Activated B cell treated with CpG ODN at 0.5 μM for 24 hours (primary cell): ENCODE measurements at regions of chr11 and their contacts with region 1.

Region 1: DNA sequence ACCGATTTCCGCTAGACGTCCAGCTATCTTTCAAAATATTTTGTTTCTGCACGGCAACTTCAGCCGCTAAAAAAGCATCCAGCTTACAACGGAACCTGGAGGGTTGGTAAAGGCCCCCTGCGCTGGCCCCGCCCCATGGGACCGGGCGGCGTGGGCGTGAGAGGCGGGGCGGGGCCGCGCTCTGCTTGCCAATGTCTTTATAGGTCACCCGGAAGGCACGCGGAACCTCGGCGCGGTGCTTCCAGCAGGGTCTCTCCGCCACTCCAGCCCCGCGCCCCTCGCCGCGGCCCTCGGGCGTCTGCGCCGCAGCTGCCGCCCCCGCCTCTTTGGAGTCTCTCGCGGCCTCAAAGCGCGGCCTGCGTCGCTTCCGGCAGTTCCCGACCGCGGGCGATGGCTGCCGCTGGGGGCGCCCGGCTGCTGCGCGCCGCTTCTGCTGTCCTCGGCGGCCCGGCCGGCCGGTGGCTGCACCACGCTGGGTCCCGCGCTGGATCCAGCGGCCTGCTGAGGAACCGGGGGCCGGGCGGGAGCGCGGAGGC is at the start of gene FDX1:
- DNase-seq: peak; percentile 87
- ATAC-seq: peak; percentile 86
- H3K4me3 Mint-ChIP-seq: peak within 1 kb of the TSS; percentile 95
- H3K27ac Mint-ChIP-seq: peak within 1 kb of the TSS; percentile 87
- H3K4me1 Mint-ChIP-seq: peaks cover 42% of the 10 kb centered on the region
- H3K27me3 Mint-ChIP-seq: no peaks in the 10 kb centered on the region
- CTCF ChIP-seq: no peak
- total RNA-seq, gene FDX1: 8.7 and 9.4 TPM in 2 replicates

Region 2: GRCh38 chr11:109946322-109946846 is 483.4 kb before region 1 on chr11:
- CTCF ChIA-PET with region 1: interaction called, 3 read pairs
- POLR2A ChIA-PET with region 1: no interaction called
- intact Hi-C with region 1: loop called (anchors 1 kb)
- DNase-seq: peak; percentile 32
- ATAC-seq: peak; percentile 92
- H3K4me3 Mint-ChIP-seq: peak overlapping the region; percentile 68
- H3K27ac Mint-ChIP-seq: no peak overlapping the region
- H3K4me1 Mint-ChIP-seq: peaks cover 13% of the 10 kb centered on the region
- H3K27me3 Mint-ChIP-seq: peaks cover 14% of the 10 kb centered on the region
- CTCF ChIP-seq: no peak

Region 3: DNA sequence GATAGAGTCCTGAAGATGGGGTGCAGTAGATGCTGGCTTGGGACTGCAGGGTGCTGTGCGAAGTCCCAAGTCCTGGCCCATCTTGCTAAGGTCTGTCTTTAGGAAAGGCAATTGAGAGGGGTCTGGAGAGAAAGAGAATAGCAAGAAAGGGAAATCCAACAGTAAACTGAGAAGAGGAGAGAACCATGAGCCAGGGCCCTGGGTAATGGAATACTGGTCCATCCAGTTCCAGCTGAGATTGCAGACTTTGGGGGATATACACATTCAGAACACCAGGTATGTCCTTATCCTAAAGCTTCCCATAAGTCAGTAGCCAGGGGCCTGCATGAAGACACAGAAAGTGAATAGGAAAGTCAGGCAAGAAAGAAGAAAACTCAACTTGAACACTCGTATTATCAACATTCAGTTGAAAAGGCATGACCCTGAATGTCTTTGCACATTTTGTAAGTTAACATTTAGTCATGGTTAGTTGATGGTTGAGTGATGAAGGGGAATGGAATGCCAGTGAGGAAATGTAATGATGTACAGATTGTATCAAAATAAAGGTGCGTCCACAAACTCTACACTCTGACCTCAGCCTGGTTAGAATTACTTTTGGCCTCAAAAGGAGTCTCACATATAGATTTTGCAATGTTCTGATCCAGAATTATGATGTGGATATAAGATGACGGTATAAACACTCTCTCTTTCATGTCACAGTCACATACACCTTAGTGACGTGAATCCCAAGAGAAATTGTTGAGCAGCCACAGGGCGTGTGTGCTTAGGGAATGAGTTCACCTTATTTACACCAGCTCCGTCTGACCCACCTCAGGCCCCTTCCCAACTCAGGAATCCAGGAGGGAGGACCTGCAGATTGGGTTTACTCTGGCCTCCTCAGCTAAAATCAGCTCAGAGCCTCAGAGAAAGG is 233.7 kb before region 1 on chr11:
- CTCF ChIA-PET with region 1: interaction called, 103 read pairs
- POLR2A ChIA-PET with region 1: interaction called, 3 read pairs
- intact Hi-C with region 1: loop called (anchors 1 kb)
- DNase-seq: no peak
- ATAC-seq: no peak
- H3K4me3 Mint-ChIP-seq: no peak overlapping the region
- H3K27ac Mint-ChIP-seq: no peak overlapping the region
- H3K4me1 Mint-ChIP-seq: peaks cover 11% of the 10 kb centered on the region
- H3K27me3 Mint-ChIP-seq: peaks cover 23% of the 10 kb centered on the region
- CTCF ChIP-seq: no peak

Region 4: GRCh38 chr11:110286298-110287040 is 143.3 kb before region 1 on chr11:
- CTCF ChIA-PET with region 1: no interaction called
- POLR2A ChIA-PET with region 1: no interaction called
- intact Hi-C with region 1: no loop called
- DNase-seq: no peak
- ATAC-seq: no peak
- H3K4me3 Mint-ChIP-seq: no peak overlapping the region
- H3K27ac Mint-ChIP-seq: no peak overlapping the region
- H3K4me1 Mint-ChIP-seq: peaks cover 14% of the 10 kb centered on the region
- H3K27me3 Mint-ChIP-seq: no peaks in the 10 kb centered on the region
- CTCF ChIP-seq: no peak

Region 5: DNA sequence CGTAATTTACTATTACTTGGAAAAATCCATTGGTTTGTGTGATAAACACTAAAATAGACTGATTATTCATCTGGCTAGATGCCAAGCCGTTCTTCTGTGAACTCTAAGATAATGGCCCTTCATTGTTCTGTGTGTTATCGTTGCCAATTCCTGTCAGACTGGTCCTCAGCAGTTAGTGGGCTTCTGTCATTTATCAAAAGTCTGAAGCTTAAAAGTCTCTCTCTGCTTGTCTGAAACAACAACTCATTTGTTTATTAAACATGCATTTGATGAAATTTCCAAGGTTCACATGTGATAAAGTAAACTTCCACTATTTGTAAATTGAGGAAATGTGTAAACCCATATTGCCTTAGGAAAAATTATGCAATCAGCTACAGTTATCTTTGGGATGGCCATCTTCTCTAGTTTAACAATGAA is 112.3 kb before region 1 on chr11:
- CTCF ChIA-PET with region 1: no interaction called
- POLR2A ChIA-PET with region 1: no interaction called
- intact Hi-C with region 1: no loop called
- DNase-seq: no peak
- ATAC-seq: no peak
- H3K4me3 Mint-ChIP-seq: no peak overlapping the region
- H3K27ac Mint-ChIP-seq: no peak overlapping the region
- H3K4me1 Mint-ChIP-seq: no peaks in the 10 kb centered on the region
- H3K27me3 Mint-ChIP-seq: no peaks in the 10 kb centered on the region
- CTCF ChIP-seq: no peak

Region 6: DNA sequence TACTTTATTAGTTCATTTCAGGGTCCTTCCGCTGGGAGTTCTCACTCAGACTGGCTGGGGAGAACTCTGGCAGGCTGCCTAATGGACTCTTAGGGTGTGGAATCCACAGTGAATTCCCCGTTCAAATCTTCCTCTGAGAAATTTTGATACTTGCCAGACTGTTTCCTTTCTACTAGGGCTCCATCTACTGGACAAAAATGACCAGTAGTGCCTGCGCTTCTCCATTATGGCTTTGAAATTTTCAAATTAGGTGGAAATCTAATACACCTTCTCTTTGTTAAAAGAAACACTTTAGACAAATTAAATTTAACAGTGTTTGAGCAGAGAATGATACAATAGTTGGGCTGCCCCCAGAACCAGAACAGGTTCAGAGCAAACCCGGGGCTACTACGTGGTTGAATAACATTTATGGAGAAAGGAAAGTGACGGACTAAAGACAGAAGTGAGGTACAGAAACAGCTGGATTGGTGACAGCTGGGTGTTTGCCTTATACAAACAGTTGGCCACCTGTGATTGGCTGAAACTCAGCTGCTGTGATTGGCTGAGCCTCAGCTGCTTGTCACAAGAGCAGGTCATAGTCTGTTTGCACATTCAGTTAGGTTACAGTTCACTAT is 53.0 kb before region 1 on chr11:
- CTCF ChIA-PET with region 1: interaction called, 5 read pairs
- POLR2A ChIA-PET with region 1: no interaction called
- intact Hi-C with region 1: loop called (anchors 1 kb)
- DNase-seq: no peak
- ATAC-seq: peak; percentile 58
- H3K4me3 Mint-ChIP-seq: peak overlapping the region; percentile 13
- H3K27ac Mint-ChIP-seq: no peak overlapping the region
- H3K4me1 Mint-ChIP-seq: peaks cover 5% of the 10 kb centered on the region
- H3K27me3 Mint-ChIP-seq: no peaks in the 10 kb centered on the region
- CTCF ChIP-seq: no peak

Region 7: DNA sequence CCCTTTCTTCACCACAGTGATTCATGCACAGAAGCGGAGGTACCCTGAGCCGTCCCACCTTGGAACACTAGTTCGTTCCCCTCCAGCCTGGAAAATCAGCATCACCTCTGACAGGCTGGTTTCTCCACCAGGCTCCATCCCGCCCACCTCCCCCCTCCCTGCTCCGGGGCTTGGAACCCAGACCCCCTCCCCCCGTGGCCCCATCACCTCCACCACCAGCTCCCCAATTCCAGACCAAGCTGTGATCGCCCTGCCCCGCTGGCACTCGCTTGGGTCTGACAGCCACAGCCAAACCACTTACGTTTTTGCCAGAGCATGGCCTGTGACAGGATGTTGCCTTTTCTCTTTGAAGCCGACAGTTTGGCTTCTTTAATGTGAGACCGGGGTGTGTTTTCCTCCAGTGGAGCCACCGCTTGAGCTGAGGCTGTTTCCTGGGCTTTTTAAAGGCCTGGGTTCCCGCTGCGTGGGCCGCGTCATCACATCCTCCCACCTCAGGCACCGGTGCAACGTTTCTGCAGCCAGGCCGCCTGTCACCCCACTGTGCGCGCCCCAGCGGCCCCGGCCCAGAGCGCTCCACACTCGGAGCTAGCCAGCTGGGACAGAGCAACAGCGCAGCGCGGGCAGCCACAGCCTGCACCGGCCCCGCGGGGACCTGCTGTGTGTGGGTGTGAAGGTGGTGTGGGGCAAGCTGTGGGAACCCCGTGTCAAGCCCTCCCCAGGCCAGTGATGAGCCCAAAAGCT is 949.2 kb after region 1 on chr11 and contains the start of gene POU2AF1:
- CTCF ChIA-PET with region 1: no interaction called
- POLR2A ChIA-PET with region 1: no interaction called
- intact Hi-C with region 1: loop called (anchors 2 kb)
- DNase-seq: peak; percentile 76
- ATAC-seq: peak; percentile 69
- H3K4me3 Mint-ChIP-seq: peak within 1 kb of the TSS; percentile 96
- H3K27ac Mint-ChIP-seq: peak within 1 kb of the TSS; percentile 98
- H3K4me1 Mint-ChIP-seq: peaks cover 88% of the 10 kb centered on the region
- H3K27me3 Mint-ChIP-seq: no peaks in the 10 kb centered on the region
- CTCF ChIP-seq: no peak
- total RNA-seq, gene POU2AF1: 141 and 155 TPM in 2 replicates

Region 8: GRCh38 chr11:111777094-111778046 is 1347.6 kb after region 1 on chr11:
- CTCF ChIA-PET with region 1: no interaction called
- POLR2A ChIA-PET with region 1: no interaction called
- intact Hi-C with region 1: loop called (anchors 10 kb)
- DNase-seq: no peak
- ATAC-seq: peak; percentile 72
- H3K4me3 Mint-ChIP-seq: peak overlapping the region; percentile 35
- H3K27ac Mint-ChIP-seq: peak overlapping the region; percentile 72
- H3K4me1 Mint-ChIP-seq: peaks cover 23% of the 10 kb centered on the region
- H3K27me3 Mint-ChIP-seq: no peaks in the 10 kb centered on the region
- CTCF ChIP-seq: no peak